Naive thymus-derived CD4-positive, alpha-beta T cell (primary cell): ENCODE measurements at regions of chrX and their contacts with region 1.

Region 1: DNA sequence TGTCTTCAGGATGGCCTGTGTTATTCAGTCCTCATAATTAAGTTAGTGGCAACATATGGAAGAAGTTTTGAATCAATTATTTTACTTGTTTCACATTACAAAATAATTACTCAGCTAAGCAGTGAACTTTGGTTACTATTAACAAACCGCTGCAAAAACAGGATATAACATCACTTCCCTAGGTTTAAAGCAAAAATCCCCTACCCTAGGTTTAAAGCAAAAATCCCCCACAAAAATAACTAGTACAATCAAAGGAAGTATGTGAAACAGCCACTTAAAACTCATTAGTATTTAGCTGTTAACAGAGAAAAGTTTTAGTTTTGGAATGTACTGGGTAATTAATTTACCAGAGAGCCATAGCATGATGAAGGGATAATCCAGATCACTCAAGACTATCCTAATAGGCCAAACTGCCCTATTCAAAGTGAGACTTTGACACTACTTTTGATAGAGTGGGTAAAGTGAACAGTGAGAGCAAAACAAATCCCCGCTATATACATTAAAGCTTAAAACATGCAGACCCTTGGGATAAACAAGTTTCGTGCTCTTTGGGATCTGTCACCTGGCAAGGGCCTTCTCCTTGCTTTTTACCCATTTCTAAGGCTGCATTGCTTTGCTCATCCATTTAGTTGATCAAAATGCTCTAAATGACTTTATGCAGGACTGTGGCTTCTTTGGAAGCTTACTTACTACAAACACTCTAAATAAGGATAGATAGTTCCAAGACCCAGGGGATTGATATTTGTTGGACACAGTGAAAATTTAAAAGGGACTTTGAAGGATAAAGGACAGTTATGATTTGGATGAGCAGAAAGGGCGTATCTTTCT is 36.4 kb upstream of the GPR174 start:
- DNase-seq: peak in 8 of 9 donors; percentile 5 to 79 (median 67)
- ATAC-seq: peak; percentile 97
- H3K4me3 ChIP-seq: peak overlapping the region; percentile 10
- H3K4me3 Mint-ChIP-seq: peak overlapping the region; percentile 50 to 81 (median 70)
- H3K27ac ChIP-seq: peak overlapping the region; percentile 87
- H3K27ac Mint-ChIP-seq: peak overlapping the region; percentile 94 to 99 (median 96)
- H3K4me1 ChIP-seq: peaks cover 27 to 50% of the 10 kb centered on the region in 2 donors
- H3K4me1 Mint-ChIP-seq: peaks cover 13 to 76% (median 64%) of the 10 kb centered on the region in 7 donors
- H3K27me3 ChIP-seq: no peaks in the 10 kb centered on the region
- H3K27me3 Mint-ChIP-seq: no peaks in the 10 kb centered on the region

Region 2: DNA sequence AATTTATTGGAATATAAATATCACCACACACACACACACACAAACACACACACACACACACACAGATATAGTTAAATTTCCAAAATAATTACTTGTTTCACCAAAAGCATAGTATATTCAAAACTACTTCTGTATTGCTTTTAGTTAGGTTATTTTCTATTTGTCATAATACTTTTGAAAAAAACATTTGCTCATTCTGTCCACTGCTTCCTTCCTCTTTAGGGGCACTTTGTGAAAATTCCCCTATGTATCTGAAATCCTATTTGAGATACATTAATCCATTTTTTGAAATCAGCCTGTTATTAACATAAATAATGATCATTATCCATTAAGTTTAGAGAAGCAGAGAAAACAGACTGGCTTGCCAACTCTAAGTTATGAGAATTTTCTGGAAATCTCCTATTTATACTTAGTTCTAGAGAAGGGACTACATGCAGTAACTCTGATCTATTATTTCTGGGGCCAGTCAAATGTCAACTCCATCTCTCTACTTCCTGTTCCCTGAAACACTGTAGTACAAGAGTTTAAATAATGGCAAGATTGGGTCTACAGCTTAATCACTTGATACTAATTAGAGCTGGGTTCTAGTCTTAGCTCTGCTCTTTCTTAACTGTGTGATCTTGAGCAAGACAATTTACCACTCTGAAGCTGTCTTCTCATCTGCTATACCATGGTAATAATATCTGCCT is 18.1 kb before region 1 on chrX:
- CTCF ChIA-PET with region 1: no interaction called
- POLR2A ChIA-PET with region 1: interaction called, 25 read pairs
- intact Hi-C with region 1: no loop called
- DNase-seq: no peak
- ATAC-seq: no peak
- H3K4me3 ChIP-seq: no peak overlapping the region
- H3K4me3 Mint-ChIP-seq: peak overlapping the region in 3 of 10 donors; percentile 11 to 42 (median 28)
- H3K27ac ChIP-seq: no peak overlapping the region
- H3K27ac Mint-ChIP-seq: peak overlapping the region in 8 of 9 donors; percentile 19 to 85 (median 66)
- H3K4me1 ChIP-seq: peaks cover 1 to 8% of the 10 kb centered on the region in 2 donors
- H3K4me1 Mint-ChIP-seq: peaks cover 0 to 71% (median 39%) of the 10 kb centered on the region in 7 donors
- H3K27me3 ChIP-seq: no peaks in the 10 kb centered on the region
- H3K27me3 Mint-ChIP-seq: no peaks in the 10 kb centered on the region

Region 3: GRCh38 chrX:79138658-79139241 is 30.6 kb after region 1 on chrX:
- CTCF ChIA-PET with region 1: interaction called, 6 read pairs
- POLR2A ChIA-PET with region 1: interaction called, 98 read pairs
- intact Hi-C with region 1: no loop called
- DNase-seq: no peak
- ATAC-seq: peak; percentile 67
- H3K4me3 ChIP-seq: no peak overlapping the region
- H3K4me3 Mint-ChIP-seq: peak overlapping the region; percentile 3 to 61 (median 32)
- H3K27ac ChIP-seq: peak overlapping the region; percentile 45
- H3K27ac Mint-ChIP-seq: peak overlapping the region; percentile 6 to 88 (median 53)
- H3K4me1 ChIP-seq: peaks cover 19 to 35% of the 10 kb centered on the region in 2 donors
- H3K4me1 Mint-ChIP-seq: peaks cover 12 to 59% (median 46%) of the 10 kb centered on the region in 7 donors
- H3K27me3 ChIP-seq: no peaks in the 10 kb centered on the region
- H3K27me3 Mint-ChIP-seq: no peaks in the 10 kb centered on the region

Region 4: DNA sequence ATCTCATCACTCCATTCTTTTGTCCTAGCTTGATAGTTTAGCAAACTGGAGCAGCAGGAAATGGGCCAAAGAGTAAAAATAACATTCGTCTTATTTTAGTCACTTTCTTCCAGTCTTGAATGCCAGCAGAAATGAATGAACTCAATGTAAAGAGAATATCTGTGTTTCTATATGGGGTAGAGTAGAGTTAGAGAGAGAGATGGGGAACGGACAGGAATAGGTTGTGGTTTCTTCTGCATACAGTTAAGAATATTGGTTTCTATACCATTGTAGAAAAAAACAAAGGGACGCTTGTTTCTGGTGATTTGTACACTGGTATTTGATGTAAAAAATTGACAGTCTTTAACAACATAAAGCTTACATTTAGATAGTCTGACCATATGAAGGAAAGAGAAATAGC is 45.2 kb after region 1 on chrX:
- CTCF ChIA-PET with region 1: interaction called, 3 read pairs
- POLR2A ChIA-PET with region 1: interaction called, 25 read pairs
- intact Hi-C with region 1: no loop called
- DNase-seq: no peak
- ATAC-seq: no peak
- H3K4me3 ChIP-seq: peak overlapping the region; percentile 57
- H3K4me3 Mint-ChIP-seq: peak overlapping the region; percentile 51 to 94 (median 84)
- H3K27ac ChIP-seq: peak overlapping the region; percentile 85
- H3K27ac Mint-ChIP-seq: peak overlapping the region; percentile 69 to 98 (median 95)
- H3K4me1 ChIP-seq: peaks cover 11 to 32% of the 10 kb centered on the region in 2 donors
- H3K4me1 Mint-ChIP-seq: peaks cover 25 to 76% (median 51%) of the 10 kb centered on the region in 7 donors
- H3K27me3 ChIP-seq: no peaks in the 10 kb centered on the region
- H3K27me3 Mint-ChIP-seq: no peaks in the 10 kb centered on the region

Region 5: DNA sequence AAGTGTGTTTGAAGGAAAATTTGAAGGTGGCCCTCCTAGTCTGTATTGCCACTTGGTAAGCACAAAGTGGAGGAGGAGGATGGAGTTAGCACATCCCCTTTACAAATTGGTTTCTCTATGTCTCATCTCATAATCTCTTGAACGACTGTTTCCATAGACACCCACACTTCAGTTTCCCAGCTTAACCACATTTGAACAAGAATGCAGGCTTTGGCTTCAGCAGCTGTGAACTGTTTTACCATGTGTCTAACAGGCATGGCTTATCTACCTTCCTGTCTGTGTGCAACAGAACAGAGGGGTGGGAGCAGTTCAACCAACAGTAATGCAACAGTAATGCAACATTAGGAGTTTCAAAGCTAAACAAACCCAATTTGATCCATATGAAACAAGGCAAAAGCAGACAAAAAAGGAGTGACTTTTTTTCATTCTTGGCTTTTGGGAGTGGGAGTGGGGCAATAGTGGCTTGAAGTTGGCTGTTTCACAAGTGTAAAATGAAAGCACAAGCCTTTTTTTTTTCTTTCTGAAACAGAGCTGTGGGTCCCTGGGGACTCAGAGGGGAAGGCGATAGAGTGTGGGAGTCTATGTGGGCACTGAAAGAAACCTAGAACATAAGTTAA is 151.1 kb after region 1 on chrX:
- CTCF ChIA-PET with region 1: no interaction called
- POLR2A ChIA-PET with region 1: interaction called, 4 read pairs
- intact Hi-C with region 1: loop called in 1 of 2 experiments (anchors 1 kb)
- DNase-seq: peak; percentile 4 to 84 (median 74)
- ATAC-seq: peak; percentile 95
- H3K4me3 ChIP-seq: peak overlapping the region; percentile 23
- H3K4me3 Mint-ChIP-seq: peak overlapping the region; percentile 10 to 86 (median 79)
- H3K27ac ChIP-seq: peak overlapping the region; percentile 78
- H3K27ac Mint-ChIP-seq: peak overlapping the region; percentile 83 to 98 (median 94)
- H3K4me1 ChIP-seq: peaks cover 52 to 65% of the 10 kb centered on the region in 2 donors
- H3K4me1 Mint-ChIP-seq: peaks cover 26 to 90% (median 82%) of the 10 kb centered on the region in 7 donors
- H3K27me3 ChIP-seq: no peaks in the 10 kb centered on the region
- H3K27me3 Mint-ChIP-seq: no peaks in the 10 kb centered on the region

Region 6: DNA sequence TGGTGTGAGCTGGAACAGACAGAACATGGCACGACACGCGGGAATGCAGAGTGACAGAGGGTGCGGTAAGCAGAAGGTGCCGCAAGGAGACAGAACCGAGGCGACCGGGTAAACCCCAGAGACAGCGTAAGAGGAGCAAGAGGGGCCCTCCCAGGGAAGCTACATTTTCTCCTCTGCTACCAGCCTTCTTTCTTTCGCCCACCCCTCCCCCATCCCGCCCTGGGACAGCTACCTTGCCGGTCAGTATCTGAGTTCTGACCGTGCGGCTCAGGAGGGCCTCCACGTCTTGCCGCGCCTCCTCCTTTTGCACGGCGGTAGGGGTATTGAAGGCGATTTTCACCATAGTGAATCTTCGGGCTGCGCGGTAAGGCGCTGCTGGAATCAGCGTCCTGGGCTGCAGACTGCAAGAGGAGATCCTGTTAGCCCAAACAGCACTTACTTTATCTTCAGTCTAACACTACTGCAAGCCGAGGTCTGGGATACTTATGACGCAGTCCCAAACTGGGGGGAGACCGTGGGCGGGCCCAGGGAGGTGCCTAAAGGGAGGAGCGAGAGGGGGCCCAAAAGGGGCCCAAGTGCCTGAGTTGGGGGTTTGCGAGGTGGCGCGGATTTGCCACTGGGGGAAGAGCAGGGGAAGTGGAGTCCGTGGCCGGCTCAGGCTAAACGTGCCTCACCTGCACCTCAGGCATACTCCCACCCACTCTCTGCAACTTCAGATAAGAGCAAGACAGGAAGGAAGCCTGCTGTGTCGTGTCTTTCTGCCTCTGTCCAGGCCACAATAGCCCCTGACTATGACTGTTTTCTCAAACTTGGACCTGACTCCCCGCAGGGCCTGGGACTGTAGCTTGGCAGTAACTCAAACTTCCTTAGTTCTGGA is 259.0 kb after region 1 on chrX and contains the start of gene ITM2A:
- CTCF ChIA-PET with region 1: no interaction called
- POLR2A ChIA-PET with region 1: interaction called, 4 read pairs
- intact Hi-C with region 1: loop called in 1 of 2 experiments (anchors 10 kb)
- DNase-seq: peak; percentile 31 to 75 (median 62)
- ATAC-seq: peak; percentile 86
- H3K4me3 ChIP-seq: peak within 1 kb of the TSS; percentile 93
- H3K4me3 Mint-ChIP-seq: peak within 1 kb of the TSS; percentile 89 to 99 (median 95)
- H3K27ac ChIP-seq: peak within 1 kb of the TSS; percentile 89
- H3K27ac Mint-ChIP-seq: peak within 1 kb of the TSS; percentile 92 to 99 (median 98)
- H3K4me1 ChIP-seq: peaks cover 7 to 13% of the 10 kb centered on the region in 2 donors
- H3K4me1 Mint-ChIP-seq: peaks cover 7 to 39% (median 31%) of the 10 kb centered on the region in 7 donors
- H3K27me3 ChIP-seq: no peaks in the 10 kb centered on the region
- H3K27me3 Mint-ChIP-seq: no peaks in the 10 kb centered on the region
- total RNA-seq, gene ITM2A: 109 to 170 (median 154) TPM